Heart right ventricle (tissue), 16 donors: ENCODE measurements at regions of chr3 and their contacts with region 1.

Region 1: DNA sequence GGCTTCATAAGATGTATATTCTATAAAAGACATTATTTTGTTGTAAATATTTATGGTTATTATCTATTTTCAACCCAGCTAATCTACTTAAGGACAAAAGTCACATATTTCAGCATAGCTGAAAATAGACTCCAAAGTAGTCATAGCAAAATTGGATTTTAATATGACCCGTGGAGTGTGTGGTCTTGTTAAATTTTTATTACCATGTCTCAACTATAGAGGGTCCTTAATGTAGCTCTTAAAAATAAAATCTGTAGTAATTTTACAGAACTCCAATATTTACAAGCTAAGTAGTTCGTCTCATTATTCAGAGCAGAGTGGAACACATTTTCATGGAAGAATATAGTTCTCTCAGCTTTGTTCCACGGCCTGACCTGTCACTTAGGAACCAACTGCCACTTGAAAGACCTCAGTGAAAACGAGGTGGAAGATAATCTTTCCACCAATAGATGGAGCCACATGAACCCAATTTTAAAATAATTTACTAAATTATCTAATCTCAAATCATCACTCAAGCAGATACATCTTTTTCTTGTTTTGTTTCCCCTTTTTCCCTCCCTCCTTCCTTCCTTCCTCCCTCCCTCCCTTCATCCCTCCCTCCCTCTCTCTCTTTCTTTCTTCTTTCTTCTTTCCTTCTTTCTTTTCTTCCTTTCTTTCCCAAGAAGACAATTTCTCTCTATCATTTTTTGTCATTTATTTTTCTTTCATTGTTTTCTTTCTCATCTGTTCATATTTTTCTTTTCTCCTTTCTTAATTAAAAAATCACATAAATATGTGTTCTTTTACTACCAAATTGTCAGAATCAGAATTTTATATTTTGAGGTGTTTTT is 97.2 kb downstream of the CLDN1 start:
- DNase-seq: no peak
- ATAC-seq: no peak
- H3K4me3 ChIP-seq: no peak overlapping the region
- H3K27ac ChIP-seq: no peak overlapping the region
- H3K4me1 ChIP-seq: peaks cover 0 to 5% (median 0%) of the 10 kb centered on the region in 9 donors
- H3K27me3 ChIP-seq: peaks cover 0 to 9% (median 0%) of the 10 kb centered on the region in 7 donors
- CTCF ChIP-seq: peak in 8 of 9 donors; percentile 25 to 60 (median 42)

Region 2: GRCh38 chr3:190306513-190307165 is 81.6 kb after region 1 on chr3:
- intact Hi-C with region 1: loop called in 1 of 10 experiments (anchors 5 kb)
- DNase-seq: no peak
- ATAC-seq: peak in 2 of 8 donors; percentile 34 to 75
- H3K4me3 ChIP-seq: no peak overlapping the region
- H3K27ac ChIP-seq: no peak overlapping the region
- H3K4me1 ChIP-seq: no peaks in the 10 kb centered on the region
- H3K27me3 ChIP-seq: peaks cover 0 to under 1% (median 0%) of the 10 kb centered on the region in 7 donors
- CTCF ChIP-seq: no peak

Region 3: DNA sequence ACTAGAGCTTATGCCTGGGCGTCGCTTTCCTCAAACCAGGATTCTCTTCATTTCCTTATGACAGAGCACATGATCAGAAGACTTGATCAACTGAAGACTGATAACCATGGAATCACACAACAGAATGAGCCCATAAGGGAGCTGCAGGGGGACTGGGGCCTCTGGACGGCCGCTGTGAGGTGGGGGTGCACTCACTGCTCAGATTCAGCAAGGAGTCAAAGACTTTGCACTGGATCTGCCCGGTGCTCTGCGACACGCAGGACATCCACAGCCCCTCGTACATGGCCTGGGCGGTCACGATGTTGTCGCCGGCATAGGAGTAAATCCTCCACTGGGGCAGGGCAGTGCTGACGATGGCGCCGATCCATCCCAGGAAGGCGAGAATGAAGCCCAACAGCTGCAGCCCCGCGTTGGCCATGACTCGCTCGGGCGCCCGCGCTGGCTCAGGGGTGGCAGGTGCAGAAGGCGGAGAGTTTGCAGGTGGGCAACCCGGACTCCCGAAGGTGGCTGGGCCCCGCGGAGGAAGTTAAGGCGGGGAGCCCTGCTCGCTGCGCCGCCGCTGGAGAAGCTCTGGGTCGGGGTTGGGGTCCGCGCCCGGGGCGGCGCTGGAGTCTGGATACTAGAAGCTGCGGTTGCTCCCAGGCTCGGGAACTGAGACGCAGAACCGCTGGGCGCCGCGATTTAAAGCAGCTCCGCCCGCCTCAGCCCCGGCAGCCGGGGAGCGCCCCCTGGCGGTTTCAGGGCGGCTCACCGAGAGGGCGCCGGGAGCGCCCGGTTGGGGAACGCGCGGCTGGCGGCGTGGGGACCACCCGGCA is 96.9 kb after region 1 on chr3 and contains the start of gene CLDN1:
- intact Hi-C with region 1: loop called in 9 of 10 experiments (anchors 2 to 10 kb)
- DNase-seq: peak; percentile 72 to 81
- ATAC-seq: peak; percentile 89 to 96 (median 94)
- H3K4me3 ChIP-seq: peak within 1 kb of the TSS; percentile 38 to 68 (median 58)
- H3K27ac ChIP-seq: no peak within 1 kb of the TSS
- H3K4me1 ChIP-seq: peaks cover 0 to 25% (median 12%) of the 10 kb centered on the region in 9 donors
- H3K27me3 ChIP-seq: peaks cover 0 to 33% (median 13%) of the 10 kb centered on the region in 7 donors
- CTCF ChIP-seq: peak in 8 of 9 donors; percentile 91 to 99 (median 96)
- total RNA-seq, gene CLDN1: 0.10 to 0.78 (median 0.17) TPM in 8 of 10 donors, not detected in the others

Region 4: GRCh38 chr3:190384241-190384863 is 159.3 kb after region 1 on chr3:
- intact Hi-C with region 1: loop called in 2 of 10 experiments (anchors 10 kb)
- DNase-seq: peak in 1 of 2 donors; percentile 23
- ATAC-seq: peak in 7 of 8 donors; percentile 33 to 90 (median 78)
- H3K4me3 ChIP-seq: no peak overlapping the region
- H3K27ac ChIP-seq: no peak overlapping the region
- H3K4me1 ChIP-seq: no peaks in the 10 kb centered on the region
- H3K27me3 ChIP-seq: peaks cover 0 to 5% (median 0%) of the 10 kb centered on the region in 7 donors
- CTCF ChIP-seq: peak; percentile 22 to 67 (median 51)

Region 5: GRCh38 chr3:190414297-190414696 is 189.2 kb after region 1 on chr3:
- intact Hi-C with region 1: loop called in 1 of 10 experiments (anchors 10 kb)
- DNase-seq: peak; percentile 10 to 34
- ATAC-seq: peak in 4 of 8 donors; percentile 39 to 78 (median 60)
- H3K4me3 ChIP-seq: no peak overlapping the region
- H3K27ac ChIP-seq: no peak overlapping the region
- H3K4me1 ChIP-seq: no peaks in the 10 kb centered on the region
- H3K27me3 ChIP-seq: no peaks in the 10 kb centered on the region
- CTCF ChIP-seq: no peak